Sigmoid colon (tissue), 7 donors: ENCODE measurements at regions of chr15 and their contacts with region 1.

Region 1: GRCh38 chr15:70097337-70098169 is at the start of gene TLE3:
- DNase-seq: peak; percentile 100
- H3K4me3 ChIP-seq: peak within 1 kb of the TSS; percentile 85 to 97 (median 94)
- H3K27ac ChIP-seq: peak within 1 kb of the TSS; percentile 93 to 99 (median 99)
- H3K4me1 ChIP-seq: peaks cover 4 to 73% (median 63%) of the 10 kb centered on the region in 4 donors
- H3K27me3 ChIP-seq: no peaks in the 10 kb centered on the region
- CTCF ChIP-seq: peak in 1 of 4 experiments; percentile 23
- EP300 ChIP-seq: peak in 1 of 4 donors; percentile 28
- POLR2A ChIP-seq: peak; percentile 92 to 96
- total RNA-seq, gene TLE3: 49.5 to 82.0 (median 58.8) TPM

Region 2: DNA sequence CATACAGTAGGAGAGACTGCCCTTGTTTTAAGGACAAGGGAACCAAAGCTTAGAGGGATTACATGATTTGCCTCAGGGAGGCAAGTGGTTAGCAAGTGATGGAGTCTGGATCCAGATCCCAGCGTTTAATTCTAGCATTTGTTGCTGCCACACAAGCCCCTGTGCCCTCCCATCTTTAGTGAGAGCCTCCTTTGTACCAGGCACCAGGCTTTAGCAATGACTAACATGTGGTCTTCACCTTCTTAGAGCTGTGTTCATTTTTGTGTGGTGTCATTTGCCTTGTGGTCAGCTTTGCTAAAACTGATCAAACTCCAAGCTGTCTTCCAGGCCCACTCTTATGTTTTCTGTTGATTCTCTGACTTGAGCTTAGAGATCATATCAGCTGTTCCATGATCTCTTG is 354.5 kb before region 1 on chr15:
- intact Hi-C with region 1: loop called (anchors 5 kb)
- DNase-seq: no peak
- H3K4me3 ChIP-seq: no peak overlapping the region
- H3K27ac ChIP-seq: peak overlapping the region in 3 of 4 donors; percentile 8 to 56 (median 55)
- H3K4me1 ChIP-seq: peaks cover 0 to 17% (median 12%) of the 10 kb centered on the region in 4 donors
- H3K27me3 ChIP-seq: no peaks in the 10 kb centered on the region
- CTCF ChIP-seq: no peak
- EP300 ChIP-seq: no peak
- POLR2A ChIP-seq: no peak

Region 3: GRCh38 chr15:70152070-70152480 is 54.5 kb after region 1 on chr15:
- intact Hi-C with region 1: loop called (anchors 2 kb)
- DNase-seq: peak; percentile 76
- H3K4me3 ChIP-seq: no peak overlapping the region
- H3K27ac ChIP-seq: peak overlapping the region in 3 of 4 donors; percentile 80 to 87 (median 86)
- H3K4me1 ChIP-seq: peaks cover 0 to 86% (median 56%) of the 10 kb centered on the region in 4 donors
- H3K27me3 ChIP-seq: no peaks in the 10 kb centered on the region
- CTCF ChIP-seq: no peak
- EP300 ChIP-seq: no peak
- POLR2A ChIP-seq: no peak

Region 4: GRCh38 chr15:70271422-70272088 is 174.0 kb after region 1 on chr15:
- intact Hi-C with region 1: loop called (anchors 2 kb)
- DNase-seq: peak; percentile 89
- H3K4me3 ChIP-seq: no peak overlapping the region
- H3K27ac ChIP-seq: peak overlapping the region; percentile 55 to 82 (median 66)
- H3K4me1 ChIP-seq: peaks cover 0 to 52% (median 44%) of the 10 kb centered on the region in 4 donors
- H3K27me3 ChIP-seq: no peaks in the 10 kb centered on the region
- CTCF ChIP-seq: no peak
- EP300 ChIP-seq: no peak
- POLR2A ChIP-seq: no peak

Region 5: DNA sequence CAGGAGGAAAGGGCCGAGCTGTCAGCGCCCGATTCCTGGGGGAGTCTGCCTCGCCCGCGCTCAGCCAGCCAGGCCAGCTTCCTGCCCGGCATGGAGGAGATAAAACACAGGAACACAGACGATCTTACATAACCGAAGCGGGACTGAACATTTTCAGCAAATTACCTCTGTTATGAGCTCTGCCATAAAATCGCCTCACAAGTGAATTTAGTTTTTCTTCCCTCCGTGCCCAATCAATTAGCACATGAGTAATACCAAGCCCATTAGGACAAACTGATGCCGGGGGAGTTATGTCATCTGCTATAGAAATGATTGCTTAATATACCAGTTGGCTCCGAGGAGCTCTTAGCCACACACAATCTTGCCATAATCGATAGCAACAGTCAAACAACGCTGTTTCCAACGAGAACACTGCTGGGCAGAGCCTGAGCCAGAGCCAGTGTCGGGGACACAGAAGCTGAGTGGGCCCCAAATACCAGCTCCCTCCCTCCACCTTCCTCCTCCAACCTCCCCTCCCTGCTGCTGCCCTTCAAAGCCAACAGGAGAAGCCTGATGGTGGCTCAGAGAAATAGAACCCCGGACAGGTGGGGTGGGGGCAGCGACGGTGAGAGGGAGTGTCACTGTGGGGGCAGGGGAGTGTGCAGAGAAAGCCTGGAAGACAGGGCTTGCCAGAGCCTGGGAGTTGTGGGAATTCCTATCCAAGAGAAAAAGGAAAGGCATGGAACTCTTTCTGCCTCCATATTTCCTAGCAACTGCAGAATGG is 279.6 kb after region 1 on chr15:
- intact Hi-C with region 1: loop called (anchors 2 kb)
- DNase-seq: peak; percentile 83
- H3K4me3 ChIP-seq: peak overlapping the region in 2 of 4 donors; percentile 13 to 19
- H3K27ac ChIP-seq: peak overlapping the region in 3 of 4 donors; percentile 73 to 76 (median 75)
- H3K4me1 ChIP-seq: peaks cover 0 to 42% (median 32%) of the 10 kb centered on the region in 4 donors
- H3K27me3 ChIP-seq: no peaks in the 10 kb centered on the region
- CTCF ChIP-seq: no peak
- EP300 ChIP-seq: no peak
- POLR2A ChIP-seq: no peak